AG04449 (cell line): ENCODE measurements at regions of chr4 and their contacts with region 1.

Region 1: GRCh38 chr4:112765317-112765975 is 128.5 kb downstream of the LARP7 start:
- DNase-seq: no peak
- H3K4me3 ChIP-seq: no peak overlapping the region
- CTCF ChIP-seq: peak; percentile 36

Region 2: GRCh38 chr4:112636688-112637551 is 128.5 kb before region 1 on chr4 and contains the starts of genes LARP7 and ZGRF1:
- CTCF ChIA-PET with region 1: interaction called, 126 read pairs
- POLR2A ChIA-PET with region 1: no interaction called
- DNase-seq: peak; percentile 92
- H3K4me3 ChIP-seq: peak within 1 kb of the TSS; percentile 87
- CTCF ChIP-seq: peak; percentile 86

Region 3: DNA sequence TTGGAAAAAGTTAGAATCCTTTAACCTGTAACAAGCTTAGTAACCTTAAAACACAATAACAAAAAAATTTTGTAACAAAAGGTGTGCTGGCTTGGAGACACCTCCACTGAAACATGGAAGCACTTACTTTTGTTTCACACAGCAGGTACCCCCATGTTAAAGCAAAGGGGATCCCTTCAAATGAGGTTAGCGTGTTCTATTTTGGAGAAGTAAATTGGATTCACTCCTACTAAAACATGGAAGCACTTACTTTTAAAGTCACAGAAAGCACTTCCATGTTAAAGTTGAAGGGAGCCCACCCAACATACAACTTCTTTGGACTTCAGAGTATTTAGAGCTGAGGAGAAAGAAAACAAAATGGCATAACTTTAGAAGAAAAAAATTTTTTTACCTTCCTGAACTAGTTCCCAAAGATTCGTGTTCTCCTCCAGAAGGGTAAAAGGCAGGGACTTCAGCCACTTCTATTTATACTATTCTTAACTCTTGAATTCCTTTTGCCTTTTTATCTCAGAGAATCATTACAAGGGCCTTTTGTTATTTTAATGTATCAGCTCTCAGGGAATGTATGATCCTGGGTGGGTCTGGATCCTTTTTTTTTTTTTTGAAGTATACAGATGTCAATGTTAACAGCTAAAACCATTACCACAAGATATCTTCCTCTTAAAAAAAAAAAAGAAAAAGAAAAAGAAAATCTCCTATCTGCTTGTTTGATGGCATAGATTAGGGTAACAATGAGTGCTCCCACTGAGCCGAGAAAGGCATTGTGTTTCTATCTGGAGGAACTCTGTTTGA is 117.0 kb before region 1 on chr4:
- CTCF ChIA-PET with region 1: interaction called, 25 read pairs
- POLR2A ChIA-PET with region 1: no interaction called
- DNase-seq: no peak
- H3K4me3 ChIP-seq: no peak overlapping the region
- CTCF ChIP-seq: no peak

Region 4: DNA sequence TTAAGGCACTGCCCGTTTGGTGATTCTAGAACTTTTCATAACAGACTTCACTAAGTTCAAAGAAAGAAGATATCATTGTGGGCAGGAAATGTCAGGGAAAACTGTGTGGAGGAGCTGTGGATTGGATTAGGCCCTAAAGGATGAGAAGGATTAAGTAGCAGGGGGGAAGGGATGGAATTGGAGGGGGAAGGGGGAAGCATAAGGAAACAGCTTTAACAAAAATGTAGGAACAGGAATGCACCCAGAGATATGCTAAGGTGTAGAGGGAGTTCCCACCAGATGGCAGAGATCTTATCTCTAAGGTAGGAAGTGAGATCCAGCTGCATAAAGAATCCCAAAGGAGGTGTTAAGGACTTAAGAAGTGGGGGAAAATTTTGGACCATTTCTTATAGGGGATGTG is 14.0 kb before region 1 on chr4:
- CTCF ChIA-PET with region 1: interaction called, 24 read pairs
- POLR2A ChIA-PET with region 1: no interaction called
- DNase-seq: no peak
- H3K4me3 ChIP-seq: no peak overlapping the region
- CTCF ChIP-seq: no peak

Region 5: GRCh38 chr4:112801341-112801740 is 35.9 kb after region 1 on chr4:
- CTCF ChIA-PET with region 1: interaction called, 10 read pairs
- POLR2A ChIA-PET with region 1: no interaction called
- DNase-seq: no peak
- H3K4me3 ChIP-seq: no peak overlapping the region
- CTCF ChIP-seq: no peak

Region 6: DNA sequence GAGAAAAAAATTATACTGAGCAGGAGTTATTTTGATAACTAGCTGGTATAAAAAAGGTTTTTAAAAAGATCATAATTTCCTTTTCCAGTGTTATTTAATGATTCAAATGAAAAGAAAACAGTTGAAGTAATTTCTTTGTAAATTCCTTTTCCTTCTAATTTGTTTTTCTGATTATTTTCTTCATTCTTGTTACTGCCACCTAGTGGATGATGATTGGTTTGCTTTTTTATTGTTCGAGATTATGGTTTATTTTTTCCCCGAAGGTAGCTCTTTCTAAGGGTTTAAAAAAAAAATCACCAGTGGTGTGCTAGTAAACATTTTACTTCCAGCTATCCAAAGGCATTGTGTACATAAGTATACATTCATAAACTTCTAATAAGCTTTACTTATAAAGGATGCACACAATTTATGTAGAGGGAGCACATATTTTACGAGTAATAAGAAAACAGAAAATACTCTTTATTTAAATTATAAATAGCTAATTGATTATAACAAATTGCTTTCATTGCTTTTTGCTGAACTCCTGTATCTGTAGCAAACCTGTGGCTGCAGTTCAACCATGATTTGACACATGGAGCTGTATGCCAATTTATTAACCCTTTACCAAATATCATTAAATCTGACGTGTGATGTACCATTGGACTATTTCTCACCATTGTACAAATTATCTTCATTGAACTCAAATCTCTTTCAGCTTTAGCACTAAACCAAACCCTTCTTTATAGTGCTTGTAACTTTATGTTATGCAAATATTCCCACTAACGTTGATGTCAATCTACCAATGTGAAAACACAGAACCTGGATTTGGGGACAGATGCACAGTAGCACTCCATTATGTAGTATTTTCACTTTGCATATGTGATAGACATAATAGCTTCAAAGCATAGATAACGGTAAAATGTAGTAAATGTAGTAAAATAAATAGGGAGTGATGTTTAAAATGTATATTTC is 186.2 kb after region 1 on chr4:
- CTCF ChIA-PET with region 1: interaction called, 289 read pairs
- POLR2A ChIA-PET with region 1: no interaction called
- DNase-seq: no peak
- H3K4me3 ChIP-seq: no peak overlapping the region
- CTCF ChIP-seq: peak; percentile 6